ENCODE measurements at regions of chr16 and their contacts with region 1.

Region 1: DNA sequence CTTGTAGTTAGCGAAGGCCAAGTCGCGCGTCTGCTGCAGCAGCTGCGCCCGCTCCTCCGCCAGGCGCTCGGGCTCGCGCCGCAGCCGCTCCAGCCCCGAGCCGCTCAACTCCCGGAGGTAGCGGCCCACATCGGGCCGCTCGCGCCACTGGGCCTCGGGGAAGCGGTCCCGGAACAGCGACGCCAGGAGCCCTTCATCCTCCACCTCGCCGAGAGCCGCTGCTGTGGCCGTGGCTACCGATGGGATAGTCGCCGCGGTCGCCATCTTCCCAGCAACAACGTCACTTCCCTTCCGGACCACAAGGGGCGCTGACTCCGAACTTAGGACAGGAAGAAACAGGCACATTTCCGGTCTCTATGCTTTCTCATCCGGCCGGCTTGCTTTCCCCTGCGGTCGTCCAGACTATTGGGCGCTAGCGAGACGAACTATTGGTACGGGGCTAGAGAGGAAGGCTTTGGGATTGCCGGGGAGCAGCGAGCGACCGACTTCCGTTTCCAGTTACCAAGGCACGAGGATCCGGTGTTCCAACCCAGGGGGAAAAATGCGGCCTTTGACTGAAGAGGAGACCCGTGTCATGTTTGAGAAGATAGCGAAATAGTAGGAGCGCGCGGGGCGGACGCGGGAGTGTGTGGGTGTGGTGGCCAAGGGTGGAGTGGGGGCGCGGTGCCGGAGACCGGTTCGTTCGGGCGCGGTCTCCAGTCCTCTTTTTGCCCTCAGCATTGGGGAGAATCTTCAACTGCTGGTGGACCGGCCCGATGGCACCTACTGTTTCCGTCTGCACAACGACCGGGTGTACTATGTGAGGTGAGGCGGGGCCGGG is at the starts of genes COG8 and NIP7:
- DNase-seq: peak; percentile 98
- H3K4me3 ChIP-seq: peak within 1 kb of the TSS; percentile 94
- H3K27ac ChIP-seq: peak within 1 kb of the TSS; percentile 77
- H3K4me1 ChIP-seq: peaks cover 32% of the 10 kb centered on the region
- CTCF ChIP-seq: peak; percentile 74
- total RNA-seq, gene COG8: 39.0 and 60.3 TPM in 2 replicates
- total RNA-seq, gene NIP7: 26.9 and 39.7 TPM in 2 replicates

Region 2: GRCh38 chr16:69253870-69254341 is 85.6 kb before region 1 on chr16:
- CTCF ChIA-PET with region 1: no interaction called
- POLR2A ChIA-PET with region 1: no interaction called
- intact Hi-C with region 1: no loop called
- DNase-seq: no peak
- H3K4me3 ChIP-seq: no peak overlapping the region
- H3K27ac ChIP-seq: no peak overlapping the region
- H3K4me1 ChIP-seq: peaks cover 3% of the 10 kb centered on the region
- CTCF ChIP-seq: no peak

Region 3: GRCh38 chr16:69310653-69311532 is 28.6 kb before region 1 on chr16 and contains the start of gene VPS4A:
- CTCF ChIA-PET with region 1: no interaction called
- POLR2A ChIA-PET with region 1: no interaction called
- intact Hi-C with region 1: loop called (anchors 1 kb)
- DNase-seq: peak; percentile 97
- H3K4me3 ChIP-seq: peak within 1 kb of the TSS; percentile 78
- H3K27ac ChIP-seq: peak within 1 kb of the TSS; percentile 58
- H3K4me1 ChIP-seq: peaks cover 12% of the 10 kb centered on the region
- CTCF ChIP-seq: peak; percentile 72
- total RNA-seq, gene VPS4A: 32.4 and 33.7 TPM in 2 replicates

Region 4: DNA sequence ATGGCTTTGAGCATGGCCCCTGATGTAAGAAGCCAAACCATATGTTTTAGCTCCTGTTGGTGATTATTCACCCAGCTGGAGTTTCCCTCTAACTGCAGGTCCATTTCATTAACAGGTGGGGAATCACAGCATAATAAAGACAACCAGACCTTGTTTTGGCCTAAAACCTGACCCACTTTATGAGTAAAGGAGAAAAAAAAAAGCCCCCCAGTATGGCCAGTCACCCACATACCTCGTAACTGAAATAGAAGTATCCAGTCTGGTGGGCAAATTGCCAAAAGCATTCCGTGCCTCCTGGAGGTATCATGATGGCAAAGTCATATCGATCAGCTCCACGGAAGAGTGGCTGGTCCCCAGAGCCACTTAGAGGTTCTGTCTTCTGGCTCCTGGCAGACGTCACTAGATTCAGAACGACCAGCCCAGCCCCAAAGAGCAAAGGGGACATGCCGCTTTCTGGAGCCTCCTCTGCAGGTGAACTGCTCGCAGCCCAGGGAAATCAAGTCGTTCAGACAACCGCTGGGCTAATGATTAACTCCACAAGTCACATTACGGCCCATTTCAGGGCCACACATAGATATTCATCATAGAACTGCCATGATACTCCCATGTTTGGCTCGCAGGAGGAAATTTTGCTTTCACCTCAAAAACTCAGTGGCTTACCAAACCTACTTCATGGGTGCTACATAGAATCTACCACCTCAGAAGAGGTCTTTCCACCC is 12.0 kb after region 1 on chr16 and contains the start of gene TMED6:
- CTCF ChIA-PET with region 1: no interaction called
- POLR2A ChIA-PET with region 1: interaction called, 5 read pairs
- intact Hi-C with region 1: loop called (anchors 1 kb)
- DNase-seq: no peak
- H3K4me3 ChIP-seq: no peak within 1 kb of the TSS
- H3K27ac ChIP-seq: no peak within 1 kb of the TSS
- H3K4me1 ChIP-seq: no peaks in the 10 kb centered on the region
- CTCF ChIP-seq: no peak
- total RNA-seq, gene TMED6: 1.7 TPM in 1 of 2 replicates, not detected in the other

Region 5: DNA sequence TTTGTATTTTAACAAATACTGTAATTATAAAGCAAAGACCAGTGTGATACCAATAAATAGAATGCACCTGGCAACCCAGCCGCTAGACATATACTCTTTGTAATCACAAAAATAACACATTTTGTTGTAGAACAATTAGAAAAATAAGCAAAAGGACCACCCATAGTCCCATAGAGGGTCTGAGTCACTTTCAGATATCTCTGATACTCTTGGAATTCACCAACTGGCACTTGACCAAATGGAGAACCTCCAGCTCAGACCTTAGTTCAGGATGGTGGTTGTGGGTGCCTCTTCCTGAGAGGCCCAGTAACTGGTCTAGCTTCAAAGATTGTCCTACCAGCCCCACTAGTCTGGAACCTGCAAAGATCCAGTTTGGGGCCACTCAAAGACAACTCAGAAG is 47.1 kb after region 1 on chr16:
- CTCF ChIA-PET with region 1: no interaction called
- POLR2A ChIA-PET with region 1: interaction called, 3 read pairs
- intact Hi-C with region 1: loop called (anchors 2 kb)
- DNase-seq: no peak
- H3K4me3 ChIP-seq: peak overlapping the region; percentile 97
- H3K27ac ChIP-seq: no peak overlapping the region
- H3K4me1 ChIP-seq: peaks cover 27% of the 10 kb centered on the region
- CTCF ChIP-seq: no peak

Region 6: DNA sequence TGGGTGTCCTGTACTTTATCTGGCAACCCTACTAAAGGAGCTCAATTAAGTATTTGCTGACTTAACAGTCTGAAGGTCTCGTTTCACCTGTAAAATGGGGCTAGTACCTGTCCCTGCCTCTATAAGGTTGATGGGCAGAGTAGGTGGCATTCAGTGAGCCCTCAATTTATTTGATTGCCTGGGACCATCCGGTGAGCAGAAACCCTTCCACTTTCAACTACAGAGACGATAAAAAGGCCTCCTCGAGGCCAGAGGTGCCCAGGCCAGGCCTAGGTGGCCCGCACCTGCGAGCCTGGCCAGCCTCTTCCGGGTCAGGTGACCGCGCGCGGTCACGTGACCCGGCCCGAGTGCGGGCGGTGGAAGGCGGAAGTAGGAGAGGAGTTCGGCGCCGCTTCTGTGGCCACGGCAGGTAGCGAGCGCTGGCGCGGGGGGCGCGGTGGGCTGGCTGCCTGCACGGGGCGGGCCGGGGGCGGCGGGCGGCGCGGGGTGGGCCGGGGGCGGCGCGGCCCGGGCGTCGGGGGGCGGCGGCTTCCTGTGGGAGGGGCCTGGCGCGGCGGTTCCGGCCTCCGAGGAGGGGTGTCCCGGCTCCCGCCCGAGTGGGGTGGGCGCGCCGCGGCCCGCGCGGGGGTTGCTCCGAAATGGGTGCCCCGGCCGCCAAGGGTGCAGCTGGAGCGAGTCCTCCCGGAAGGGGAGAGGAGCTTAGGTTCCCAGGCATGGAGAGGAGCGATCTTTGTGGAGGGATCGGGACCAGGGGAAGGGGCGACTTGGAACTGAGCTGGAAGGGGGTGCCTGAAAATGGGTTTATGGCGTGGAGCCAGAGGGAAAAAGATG is 422.7 kb after region 1 on chr16 and contains the start of gene WWP2:
- CTCF ChIA-PET with region 1: no interaction called
- POLR2A ChIA-PET with region 1: no interaction called
- intact Hi-C with region 1: loop called (anchors 10 kb)
- DNase-seq: peak; percentile 90
- H3K4me3 ChIP-seq: peak within 1 kb of the TSS; percentile 96
- H3K27ac ChIP-seq: peak within 1 kb of the TSS; percentile 56
- H3K4me1 ChIP-seq: peaks cover 17% of the 10 kb centered on the region
- CTCF ChIP-seq: no peak
- total RNA-seq, gene WWP2: 20.8 and 30.3 TPM in 2 replicates

Measured in OCI-LY7 (cell line).